ENCODE measurements at regions of chr12 and their contacts with region 1.

Region 1: DNA sequence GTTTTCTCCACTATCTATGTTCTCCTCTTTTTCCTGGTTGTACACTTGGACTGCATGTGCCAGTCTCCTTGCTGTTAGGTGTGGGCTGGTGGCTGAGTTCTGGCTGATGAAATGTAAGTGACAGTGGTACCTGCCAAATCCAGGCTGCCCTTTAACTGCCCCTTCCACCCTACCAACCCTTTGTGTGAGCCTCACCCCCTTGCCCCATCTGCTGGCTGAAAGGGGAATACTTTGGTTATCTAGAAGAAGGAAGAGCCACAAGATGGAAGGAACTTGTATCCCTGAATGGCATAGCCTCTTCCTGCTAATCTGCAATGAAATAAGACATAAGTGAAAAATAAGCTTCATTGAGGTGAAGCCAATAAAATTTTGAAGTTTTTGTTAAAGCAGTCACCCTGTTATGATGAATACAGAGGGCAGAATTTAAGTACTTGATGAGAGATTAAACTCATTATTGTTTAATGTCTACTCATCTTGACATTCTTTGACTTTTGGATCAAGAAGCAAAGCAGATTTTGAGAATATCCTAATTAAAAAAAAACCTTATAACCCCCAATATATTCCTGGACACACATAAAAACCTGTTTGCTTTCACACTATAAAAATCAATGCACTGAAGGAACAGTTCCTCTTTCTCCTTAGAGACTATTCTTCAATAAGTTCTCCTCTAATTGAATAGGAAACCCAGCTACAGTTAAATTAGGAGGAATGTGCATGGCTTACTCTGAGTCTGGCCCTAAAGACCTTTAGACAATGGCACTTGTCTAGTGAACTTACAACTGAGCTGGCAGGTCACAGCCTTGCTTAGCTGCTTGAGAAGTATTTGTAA is 262.6 kb upstream of the BTG1 start:
- DNase-seq: no peak
- ATAC-seq: peak; percentile 42
- H3K4me3 Mint-ChIP-seq: peak overlapping the region; percentile 50
- H3K27ac Mint-ChIP-seq: peak overlapping the region; percentile 88
- H3K4me1 Mint-ChIP-seq: peaks cover 68% of the 10 kb centered on the region
- H3K27me3 Mint-ChIP-seq: no peaks in the 10 kb centered on the region
- CTCF ChIP-seq: no peak

Region 2: DNA sequence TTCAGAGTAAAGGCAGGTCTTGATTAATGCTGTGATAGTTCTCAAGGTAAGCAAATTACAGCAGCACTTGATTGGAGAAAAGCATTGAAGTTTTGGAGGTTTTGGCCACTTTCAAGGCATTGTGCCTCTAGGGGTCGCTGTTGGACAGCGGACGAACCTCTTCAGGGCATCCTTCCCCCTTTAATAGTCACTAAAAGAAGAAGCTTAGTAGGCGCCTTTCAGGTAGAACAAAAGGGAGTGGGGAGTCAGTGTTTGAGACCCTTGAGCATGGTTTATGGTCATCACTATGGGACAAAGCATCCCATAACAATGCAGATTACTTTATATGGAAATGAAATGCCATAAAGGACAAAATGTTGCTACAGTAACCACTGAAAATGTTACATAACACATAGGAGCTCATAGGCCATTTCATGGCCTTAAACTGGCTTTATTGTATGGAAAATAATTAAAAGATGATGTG is 1026.2 kb before region 1 on chr12:
- CTCF ChIA-PET with region 1: interaction called, 3 read pairs
- POLR2A ChIA-PET with region 1: no interaction called
- intact Hi-C with region 1: loop called (anchors 5 kb)
- DNase-seq: peak; percentile 63
- ATAC-seq: peak; percentile 78
- H3K4me3 Mint-ChIP-seq: peak overlapping the region; percentile 76
- H3K27ac Mint-ChIP-seq: peak overlapping the region; percentile 35
- H3K4me1 Mint-ChIP-seq: peaks cover 4% of the 10 kb centered on the region
- H3K27me3 Mint-ChIP-seq: no peaks in the 10 kb centered on the region
- CTCF ChIP-seq: peak; percentile 62

Region 3: DNA sequence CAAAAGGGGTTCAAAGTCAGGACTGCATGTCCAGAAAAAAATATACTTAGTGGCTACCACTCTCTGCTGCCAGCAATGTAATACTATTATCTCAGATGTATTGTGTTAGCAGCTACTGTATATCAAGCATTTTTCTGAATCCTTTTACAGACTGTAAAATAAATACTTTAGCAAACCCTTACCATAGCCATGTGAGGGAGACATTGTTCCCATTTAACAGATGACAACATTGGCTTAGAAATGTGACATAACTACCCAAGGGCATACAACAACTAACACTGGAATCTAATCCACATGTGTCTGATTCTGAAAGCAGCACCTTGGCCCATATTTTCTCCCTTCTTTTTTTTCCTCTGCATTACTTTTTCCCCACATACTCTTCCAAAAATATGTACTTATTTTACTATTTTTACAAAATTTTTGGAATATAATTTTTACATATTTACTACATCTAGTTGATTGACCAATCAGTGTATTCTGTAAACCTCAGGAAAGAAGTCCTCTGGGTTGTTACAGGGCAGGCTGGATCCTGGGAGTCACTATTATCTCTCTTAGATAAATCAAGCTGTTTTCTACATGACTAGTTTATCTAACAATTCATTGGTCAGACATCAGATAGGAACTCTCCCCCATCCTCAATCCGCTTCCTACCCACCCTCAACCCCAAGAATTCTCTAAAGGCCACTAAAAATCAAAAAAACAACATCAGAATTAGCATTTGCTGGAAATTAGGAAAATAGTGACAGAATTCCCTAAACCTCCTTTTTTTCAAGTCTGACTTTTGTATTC is 416.7 kb before region 1 on chr12:
- CTCF ChIA-PET with region 1: no interaction called
- POLR2A ChIA-PET with region 1: no interaction called
- intact Hi-C with region 1: loop called (anchors 1 kb)
- DNase-seq: no peak
- ATAC-seq: peak; percentile 47
- H3K4me3 Mint-ChIP-seq: no peak overlapping the region
- H3K27ac Mint-ChIP-seq: no peak overlapping the region
- H3K4me1 Mint-ChIP-seq: peaks cover 2% of the 10 kb centered on the region
- H3K27me3 Mint-ChIP-seq: no peaks in the 10 kb centered on the region
- CTCF ChIP-seq: no peak

Region 4: GRCh38 chr12:92185052-92185451 is 223.2 kb before region 1 on chr12:
- CTCF ChIA-PET with region 1: no interaction called
- POLR2A ChIA-PET with region 1: interaction called, 5 read pairs
- intact Hi-C with region 1: loop called (anchors 1 kb)
- DNase-seq: no peak
- ATAC-seq: peak; percentile 54
- H3K4me3 Mint-ChIP-seq: peak overlapping the region; percentile 76
- H3K27ac Mint-ChIP-seq: peak overlapping the region; percentile 95
- H3K4me1 Mint-ChIP-seq: peaks cover 57% of the 10 kb centered on the region
- H3K27me3 Mint-ChIP-seq: no peaks in the 10 kb centered on the region
- CTCF ChIP-seq: no peak

Region 5: GRCh38 chr12:92424338-92424737 is 16.1 kb after region 1 on chr12:
- CTCF ChIA-PET with region 1: interaction called, 5 read pairs
- POLR2A ChIA-PET with region 1: interaction called, 8 read pairs
- intact Hi-C with region 1: loop called (anchors 1 kb)
- DNase-seq: no peak
- ATAC-seq: no peak
- H3K4me3 Mint-ChIP-seq: no peak overlapping the region
- H3K27ac Mint-ChIP-seq: peak overlapping the region; percentile 66
- H3K4me1 Mint-ChIP-seq: peaks cover 74% of the 10 kb centered on the region
- H3K27me3 Mint-ChIP-seq: no peaks in the 10 kb centered on the region
- CTCF ChIP-seq: no peak

Region 6: DNA sequence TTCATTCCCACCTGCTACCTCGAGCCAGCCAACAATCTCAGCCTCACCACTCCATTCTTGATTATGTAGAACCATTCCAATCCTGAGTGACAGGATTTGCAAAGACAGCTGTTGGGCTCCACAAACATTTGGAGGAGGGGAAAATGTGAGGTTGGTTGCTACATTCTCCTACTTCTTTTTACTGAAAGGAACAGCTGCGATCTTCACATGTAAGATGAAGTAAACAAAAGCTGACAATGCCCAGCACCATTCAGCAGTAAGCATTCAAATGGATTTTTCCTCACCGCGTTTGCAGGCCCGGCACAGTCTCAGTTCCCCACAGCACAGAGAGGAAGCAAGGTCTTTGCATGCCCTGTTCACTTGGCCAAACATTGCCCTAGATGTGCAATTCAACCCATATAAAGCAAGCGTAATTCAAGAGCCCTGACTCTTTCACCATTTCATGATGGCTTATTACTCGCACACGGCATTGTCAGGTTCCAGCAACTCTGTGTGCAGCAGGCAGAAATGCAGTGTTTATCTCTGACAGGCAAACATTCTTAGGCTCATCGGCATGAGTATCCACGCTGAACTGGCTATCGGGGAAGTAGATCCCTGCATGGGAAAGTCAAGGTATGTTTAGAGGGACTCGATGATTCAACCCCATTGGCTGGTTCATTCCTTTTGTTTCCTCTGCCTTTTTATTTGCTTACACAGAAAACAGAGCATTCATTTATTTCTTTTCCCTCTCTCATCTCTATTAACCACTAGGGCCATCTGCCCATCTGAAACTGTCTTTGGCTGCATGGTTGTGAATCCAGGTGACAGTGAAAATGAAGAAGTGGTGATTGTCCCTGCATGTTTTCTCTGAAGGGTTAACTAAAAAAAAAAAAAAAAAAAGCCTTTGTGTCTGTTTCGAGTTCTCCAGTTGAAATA is 58.4 kb after region 1 on chr12:
- CTCF ChIA-PET with region 1: interaction called, 3 read pairs
- POLR2A ChIA-PET with region 1: interaction called, 19 read pairs
- intact Hi-C with region 1: loop called (anchors 1 kb)
- DNase-seq: peak; percentile 51
- ATAC-seq: peak; percentile 74
- H3K4me3 Mint-ChIP-seq: peak overlapping the region; percentile 93
- H3K27ac Mint-ChIP-seq: peak overlapping the region; percentile 99
- H3K4me1 Mint-ChIP-seq: peaks cover 94% of the 10 kb centered on the region
- H3K27me3 Mint-ChIP-seq: no peaks in the 10 kb centered on the region
- CTCF ChIP-seq: no peak